ENCODE measurements at regions of chr15 and their contacts with region 1.

Region 1: DNA sequence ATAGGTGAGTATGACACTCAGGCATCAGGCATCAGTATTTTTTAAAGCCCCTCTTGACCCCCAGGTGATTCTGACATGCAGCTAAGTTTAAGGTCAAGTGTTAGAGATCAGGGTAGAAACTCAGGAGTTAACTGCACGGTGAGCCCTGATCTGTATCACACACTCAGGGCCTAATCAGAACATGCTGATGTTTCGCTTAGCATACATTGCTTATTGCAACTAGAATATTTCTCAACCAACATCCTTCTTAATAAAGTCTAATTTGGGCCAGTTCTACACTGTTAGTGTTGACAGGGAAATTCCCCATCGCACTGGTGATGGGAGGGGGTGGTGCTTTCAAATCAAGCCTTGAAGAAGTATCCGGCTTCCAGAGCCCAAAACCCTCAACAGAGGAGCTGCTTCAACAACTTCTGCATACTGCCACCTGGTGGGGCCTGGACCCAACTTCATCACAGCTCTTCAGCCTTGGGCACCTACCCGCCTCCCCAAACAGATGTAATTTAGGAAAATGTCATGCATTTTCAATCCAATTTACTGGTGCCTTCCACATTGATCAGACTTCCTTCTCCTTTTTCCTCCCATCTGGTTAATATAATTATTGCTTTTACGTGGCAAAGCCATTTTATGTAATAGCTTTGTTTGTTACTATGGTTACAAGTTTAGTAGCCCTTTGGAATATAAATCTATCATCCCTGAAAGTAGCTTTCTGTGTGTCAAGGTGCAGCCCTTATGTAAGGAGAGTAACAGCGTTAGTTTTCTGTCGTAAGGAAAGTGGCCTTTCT is 312.2 kb downstream of the RORA start:
- DNase-seq: peak; percentile 93
- H3K4me3 Mint-ChIP-seq: no peak overlapping the region
- H3K27ac Mint-ChIP-seq: peak overlapping the region; percentile 5
- H3K4me1 Mint-ChIP-seq: peaks cover 25% of the 10 kb centered on the region
- H3K27me3 Mint-ChIP-seq: peaks cover 3% of the 10 kb centered on the region

Region 2: GRCh38 chr15:60520825-60521368 is 396.0 kb before region 1 on chr15:
- CTCF ChIA-PET with region 1: interaction called, 21 read pairs
- POLR2A ChIA-PET with region 1: no interaction called
- intact Hi-C with region 1: no loop called
- DNase-seq: peak; percentile 88
- H3K4me3 Mint-ChIP-seq: peak overlapping the region; percentile 20
- H3K27ac Mint-ChIP-seq: peak overlapping the region; percentile 56
- H3K4me1 Mint-ChIP-seq: peaks cover 60% of the 10 kb centered on the region
- H3K27me3 Mint-ChIP-seq: no peaks in the 10 kb centered on the region

Region 3: DNA sequence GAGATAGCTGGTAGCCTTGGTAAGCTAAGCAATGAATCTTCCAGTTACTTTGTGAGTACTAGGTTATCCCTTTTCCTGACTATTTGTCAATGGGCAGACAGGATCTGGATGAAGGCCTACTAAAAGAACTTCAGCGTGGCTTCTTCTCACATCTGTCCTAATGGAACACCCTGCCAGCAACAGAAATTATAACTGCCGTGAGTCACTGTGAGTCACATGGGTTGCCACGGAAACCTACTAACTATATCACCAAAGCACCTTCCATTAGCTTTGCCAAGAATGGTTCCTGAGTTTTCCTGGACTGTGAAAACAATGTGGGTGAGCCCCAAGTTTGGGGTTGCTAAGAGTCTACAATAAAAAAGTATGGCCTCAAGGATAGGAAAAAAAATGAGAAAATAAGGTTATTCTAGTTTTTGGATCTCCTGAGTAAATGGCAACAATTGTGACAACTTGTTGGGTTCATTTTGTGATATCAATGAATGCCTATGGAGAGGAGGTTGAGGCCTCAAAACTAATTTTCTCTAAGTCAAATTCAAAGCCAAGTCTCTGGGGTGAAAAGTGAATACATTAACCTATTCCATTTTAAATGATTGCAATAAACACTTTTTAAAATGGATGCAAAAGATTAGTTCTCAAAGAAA is 242.8 kb before region 1 on chr15:
- CTCF ChIA-PET with region 1: interaction called, 13 read pairs
- POLR2A ChIA-PET with region 1: no interaction called
- intact Hi-C with region 1: no loop called
- DNase-seq: peak; percentile 78
- H3K4me3 Mint-ChIP-seq: no peak overlapping the region
- H3K27ac Mint-ChIP-seq: no peak overlapping the region
- H3K4me1 Mint-ChIP-seq: peaks cover 36% of the 10 kb centered on the region
- H3K27me3 Mint-ChIP-seq: no peaks in the 10 kb centered on the region

Region 4: DNA sequence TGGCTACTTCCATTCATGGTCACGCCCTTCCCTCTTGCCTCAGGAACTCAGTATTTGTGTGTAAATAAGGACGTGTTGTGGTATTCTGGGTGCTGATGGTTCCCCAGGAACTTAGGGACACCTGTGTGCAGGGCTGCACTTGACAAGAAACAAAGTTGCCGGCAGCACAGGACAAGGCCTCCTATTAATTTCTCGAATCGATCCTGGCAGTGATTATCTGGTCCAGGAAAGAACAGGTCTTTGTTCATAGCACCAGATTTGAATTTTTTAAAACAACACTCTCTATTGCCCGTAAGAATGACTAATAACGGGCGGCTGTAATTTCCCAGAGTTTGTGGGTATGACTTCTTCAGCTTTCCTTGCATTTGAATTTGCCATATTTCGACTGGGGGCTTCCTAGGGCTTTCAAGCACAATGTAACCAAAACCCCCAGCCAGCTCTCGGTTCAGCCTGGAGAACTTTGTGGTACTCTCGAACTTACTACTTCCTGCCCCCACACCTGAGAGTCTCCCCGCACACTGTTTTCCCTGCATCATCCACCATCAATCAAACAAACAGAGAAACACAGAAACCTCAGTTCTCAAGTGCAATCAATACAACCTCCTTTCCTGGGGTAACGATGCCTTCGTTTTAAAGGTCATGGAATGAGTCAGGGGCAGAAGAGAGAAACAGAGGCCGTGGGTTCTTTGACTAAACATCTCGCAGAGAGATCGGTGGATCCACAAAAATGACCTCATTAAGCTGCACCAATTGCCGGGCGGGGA is 196.2 kb before region 1 on chr15:
- CTCF ChIA-PET with region 1: interaction called, 15 read pairs
- POLR2A ChIA-PET with region 1: no interaction called
- intact Hi-C with region 1: no loop called
- DNase-seq: peak; percentile 86
- H3K4me3 Mint-ChIP-seq: peak overlapping the region; percentile 65
- H3K27ac Mint-ChIP-seq: peak overlapping the region; percentile 95
- H3K4me1 Mint-ChIP-seq: peaks cover 64% of the 10 kb centered on the region
- H3K27me3 Mint-ChIP-seq: no peaks in the 10 kb centered on the region

Region 5: GRCh38 chr15:60865507-60865906 is 51.4 kb before region 1 on chr15:
- CTCF ChIA-PET with region 1: interaction called, 12 read pairs
- POLR2A ChIA-PET with region 1: no interaction called
- intact Hi-C with region 1: no loop called
- DNase-seq: no peak
- H3K4me3 Mint-ChIP-seq: no peak overlapping the region
- H3K27ac Mint-ChIP-seq: no peak overlapping the region
- H3K4me1 Mint-ChIP-seq: peaks cover 21% of the 10 kb centered on the region
- H3K27me3 Mint-ChIP-seq: no peaks in the 10 kb centered on the region

Region 6: DNA sequence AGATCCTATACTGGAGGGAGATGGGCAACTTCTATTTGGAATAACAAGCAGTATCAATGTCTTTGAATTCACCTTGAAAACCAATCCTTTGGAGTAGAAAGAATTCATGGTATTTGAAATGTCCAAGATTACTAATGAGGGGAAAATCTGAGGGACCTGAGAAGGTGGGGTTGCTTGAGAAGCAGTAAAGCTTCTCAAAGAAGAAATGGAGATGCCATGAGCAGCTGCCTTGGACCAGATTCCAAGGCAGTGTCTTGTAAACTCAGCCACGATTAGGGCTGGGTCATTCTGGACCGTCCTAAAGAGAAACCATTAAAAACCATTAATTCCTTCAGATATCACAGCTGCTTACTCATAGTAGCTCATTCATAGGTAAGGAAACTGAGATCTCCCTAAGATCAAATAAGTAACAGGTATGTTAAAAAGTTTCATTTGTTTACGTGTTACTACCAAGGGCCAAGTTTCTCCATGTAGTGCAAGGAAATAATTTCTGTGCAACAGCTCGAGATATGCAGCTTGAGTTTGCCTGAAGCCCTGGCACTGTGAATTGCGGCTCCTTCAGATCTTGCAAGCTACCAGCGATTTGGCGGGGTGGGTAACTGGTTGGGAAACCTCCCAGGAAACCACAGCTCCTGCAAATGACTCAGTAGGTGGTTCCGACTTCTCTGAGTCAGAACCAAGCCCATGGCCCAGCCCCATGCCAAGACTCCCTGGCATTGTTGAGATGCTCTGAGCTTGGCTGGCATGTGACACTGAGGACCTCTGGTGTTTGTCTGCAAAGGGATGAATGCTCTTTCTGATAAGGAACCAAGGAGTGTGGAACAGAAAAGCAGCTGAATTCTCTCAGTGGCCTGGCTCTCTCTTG is 15.4 kb after region 1 on chr15:
- CTCF ChIA-PET with region 1: interaction called, 48 read pairs
- POLR2A ChIA-PET with region 1: interaction called, 3 read pairs
- intact Hi-C with region 1: no loop called
- DNase-seq: peak; percentile 86
- H3K4me3 Mint-ChIP-seq: no peak overlapping the region
- H3K27ac Mint-ChIP-seq: no peak overlapping the region
- H3K4me1 Mint-ChIP-seq: peaks cover 15% of the 10 kb centered on the region
- H3K27me3 Mint-ChIP-seq: peaks cover 7% of the 10 kb centered on the region

Region 7: GRCh38 chr15:61623746-61624145 is 706.9 kb after region 1 on chr15:
- CTCF ChIA-PET with region 1: no interaction called
- POLR2A ChIA-PET with region 1: no interaction called
- intact Hi-C with region 1: no loop called
- DNase-seq: no peak
- H3K4me3 Mint-ChIP-seq: no peak overlapping the region
- H3K27ac Mint-ChIP-seq: no peak overlapping the region
- H3K4me1 Mint-ChIP-seq: no peaks in the 10 kb centered on the region
- H3K27me3 Mint-ChIP-seq: peaks cover 3% of the 10 kb centered on the region

Measured in activated CD4-positive, alpha-beta memory T cell treated with anti-CD3 and anti-CD28 coated beads for 36 hours (primary cell).